Heart right ventricle (tissue), 16 donors: ENCODE measurements at regions of chr1 and their contacts with region 1.

Region 1: DNA sequence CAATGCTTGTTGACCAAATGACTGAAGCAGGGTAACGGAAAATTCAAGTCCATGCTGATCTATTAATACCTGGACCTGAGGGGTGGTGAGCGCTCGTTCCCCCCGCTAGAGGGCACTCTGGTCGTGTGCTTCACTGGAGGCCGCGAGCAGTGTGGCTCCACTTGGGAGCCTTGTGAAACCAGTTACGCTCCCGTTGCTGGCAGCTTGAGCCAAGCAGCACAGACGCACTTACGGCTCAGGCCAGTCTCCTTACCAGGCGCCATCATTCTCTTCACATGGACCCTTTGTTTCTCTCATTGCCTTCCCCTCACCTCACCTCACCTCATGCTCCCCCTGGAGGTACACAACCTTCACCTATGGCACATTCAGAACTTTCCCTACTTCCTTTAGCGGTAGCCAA is 49.7 kb upstream of the TSPAN2 start:
- DNase-seq: peak; percentile 84 to 86
- ATAC-seq: peak; percentile 86 to 94 (median 92)
- H3K4me3 ChIP-seq: no peak overlapping the region
- H3K27ac ChIP-seq: peak overlapping the region in 5 of 10 donors; percentile 25 to 59 (median 32)
- H3K4me1 ChIP-seq: peaks cover 0 to 41% (median 20%) of the 10 kb centered on the region in 9 donors
- H3K27me3 ChIP-seq: no peaks in the 10 kb centered on the region
- CTCF ChIP-seq: peak; percentile 77 to 95 (median 89)

Region 2: GRCh38 chr1:114511032-114511785 is 627.8 kb before region 1 on chr1 and contains the start of gene TRIM33:
- intact Hi-C with region 1: no loop called
- DNase-seq: peak; percentile 92 to 94
- ATAC-seq: peak; percentile 95 to 97 (median 96)
- H3K4me3 ChIP-seq: peak within 1 kb of the TSS; percentile 82 to 100 (median 94)
- H3K27ac ChIP-seq: peak within 1 kb of the TSS; percentile 89 to 99 (median 96)
- H3K4me1 ChIP-seq: peaks cover 6 to 50% (median 41%) of the 10 kb centered on the region in 9 donors
- H3K27me3 ChIP-seq: no peaks in the 10 kb centered on the region
- CTCF ChIP-seq: peak in 2 of 9 donors; percentile 8 to 17
- total RNA-seq, gene TRIM33: 13.6 to 28.7 (median 21.4) TPM

Region 3: GRCh38 chr1:115179397-115179835 is 40.4 kb after region 1 on chr1:
- intact Hi-C with region 1: loop called in 1 of 10 experiments (anchors 5 kb)
- DNase-seq: peak; percentile 51 to 72
- ATAC-seq: peak; percentile 40 to 93 (median 75)
- H3K4me3 ChIP-seq: no peak overlapping the region
- H3K27ac ChIP-seq: peak overlapping the region in 6 of 10 donors; percentile 24 to 63 (median 42)
- H3K4me1 ChIP-seq: peaks cover 7 to 28% (median 15%) of the 10 kb centered on the region in 9 donors
- H3K27me3 ChIP-seq: no peaks in the 10 kb centered on the region
- CTCF ChIP-seq: no peak

Region 4: DNA sequence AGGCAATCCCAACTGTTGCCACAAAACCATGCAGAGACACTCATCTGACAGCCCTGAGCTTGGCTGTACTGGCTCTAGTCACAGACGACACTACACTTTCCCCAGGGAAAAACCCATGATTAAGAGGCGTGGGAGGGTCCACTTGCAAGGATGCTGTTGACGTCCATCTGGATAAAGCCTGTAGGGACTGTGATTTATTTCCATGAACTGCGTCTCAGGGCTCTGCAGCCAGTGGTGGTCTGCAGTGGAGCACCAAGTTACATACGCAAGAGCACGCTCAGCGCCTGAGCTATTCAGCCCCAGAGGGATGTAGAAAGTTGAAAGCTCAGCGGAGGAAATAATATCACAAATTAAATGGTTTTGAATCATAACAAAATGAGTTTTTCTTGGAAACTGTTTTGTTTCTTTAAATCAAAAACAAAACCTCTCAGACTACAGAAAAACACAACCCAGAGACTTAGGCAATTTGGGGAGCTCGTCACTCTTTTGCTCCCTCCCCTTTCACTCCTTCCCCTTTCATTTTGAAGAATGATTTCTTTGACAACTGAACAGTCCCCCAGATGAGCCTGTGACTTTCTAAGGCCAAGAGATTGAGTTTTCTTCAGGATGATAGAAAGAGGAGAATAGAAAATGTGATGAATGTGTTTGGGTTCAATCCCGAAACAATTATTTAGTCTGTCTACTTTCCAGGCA is 127.9 kb after region 1 on chr1:
- intact Hi-C with region 1: loop called in 5 of 10 experiments (anchors 10 kb)
- DNase-seq: peak; percentile 42 to 74
- ATAC-seq: peak; percentile 78 to 94 (median 90)
- H3K4me3 ChIP-seq: peak overlapping the region in 2 of 10 donors; percentile 4 to 6
- H3K27ac ChIP-seq: peak overlapping the region in 9 of 10 donors; percentile 42 to 77 (median 63)
- H3K4me1 ChIP-seq: peaks cover 0 to 19% (median 0%) of the 10 kb centered on the region in 9 donors
- H3K27me3 ChIP-seq: no peaks in the 10 kb centered on the region
- CTCF ChIP-seq: no peak

Region 5: GRCh38 chr1:115337633-115338456 is 198.9 kb after region 1 on chr1 and contains the start of gene NGF:
- intact Hi-C with region 1: loop called in 4 of 10 experiments (anchors 5 to 10 kb)
- DNase-seq: peak; percentile 60 to 64
- ATAC-seq: peak; percentile 81 to 91 (median 86)
- H3K4me3 ChIP-seq: peak within 1 kb of the TSS; percentile 39 to 87 (median 68)
- H3K27ac ChIP-seq: peak within 1 kb of the TSS; percentile 33 to 89 (median 82)
- H3K4me1 ChIP-seq: peaks cover 12 to 76% (median 28%) of the 10 kb centered on the region in 9 donors
- H3K27me3 ChIP-seq: peaks cover 0 to 33% (median 7%) of the 10 kb centered on the region in 7 donors
- CTCF ChIP-seq: no peak
- total RNA-seq, gene NGF: 1.8 to 5.3 (median 2.9) TPM

Region 6: GRCh38 chr1:115469703-115470476 is 330.9 kb after region 1 on chr1:
- intact Hi-C with region 1: loop called in 8 of 10 experiments (anchors 2 to 5 kb)
- DNase-seq: peak; percentile 22 to 42
- ATAC-seq: peak in 7 of 8 donors; percentile 38 to 67 (median 58)
- H3K4me3 ChIP-seq: no peak overlapping the region
- H3K27ac ChIP-seq: no peak overlapping the region
- H3K4me1 ChIP-seq: peaks cover 0 to 14% (median 0%) of the 10 kb centered on the region in 9 donors
- H3K27me3 ChIP-seq: peaks cover 0 to 4% (median 0%) of the 10 kb centered on the region in 7 donors
- CTCF ChIP-seq: peak; percentile 66 to 89 (median 83)

Region 7: GRCh38 chr1:115595279-115596079 is 456.5 kb after region 1 on chr1:
- intact Hi-C with region 1: loop called (anchors 1 to 10 kb)
- DNase-seq: peak; percentile 88 to 93
- ATAC-seq: peak; percentile 85 to 94 (median 92)
- H3K4me3 ChIP-seq: no peak overlapping the region
- H3K27ac ChIP-seq: peak overlapping the region in 1 of 10 donors; percentile 18
- H3K4me1 ChIP-seq: peaks cover 4 to 34% (median 11%) of the 10 kb centered on the region in 9 donors
- H3K27me3 ChIP-seq: no peaks in the 10 kb centered on the region
- CTCF ChIP-seq: peak; percentile 86 to 96 (median 94)